HAP-1 (cell line): ENCODE measurements at regions of chr9 and their contacts with region 1.

Region 1: GRCh38 chr9:75001719-75002422 is 26.2 kb downstream of the CARNMT1 start:
- DNase-seq: peak; percentile 9 to 65
- H3K4me3 ChIP-seq: no peak overlapping the region
- H3K4me1 ChIP-seq: no peaks in the 10 kb centered on the region
- H3K27me3 ChIP-seq: no peaks in the 10 kb centered on the region

Region 2: DNA sequence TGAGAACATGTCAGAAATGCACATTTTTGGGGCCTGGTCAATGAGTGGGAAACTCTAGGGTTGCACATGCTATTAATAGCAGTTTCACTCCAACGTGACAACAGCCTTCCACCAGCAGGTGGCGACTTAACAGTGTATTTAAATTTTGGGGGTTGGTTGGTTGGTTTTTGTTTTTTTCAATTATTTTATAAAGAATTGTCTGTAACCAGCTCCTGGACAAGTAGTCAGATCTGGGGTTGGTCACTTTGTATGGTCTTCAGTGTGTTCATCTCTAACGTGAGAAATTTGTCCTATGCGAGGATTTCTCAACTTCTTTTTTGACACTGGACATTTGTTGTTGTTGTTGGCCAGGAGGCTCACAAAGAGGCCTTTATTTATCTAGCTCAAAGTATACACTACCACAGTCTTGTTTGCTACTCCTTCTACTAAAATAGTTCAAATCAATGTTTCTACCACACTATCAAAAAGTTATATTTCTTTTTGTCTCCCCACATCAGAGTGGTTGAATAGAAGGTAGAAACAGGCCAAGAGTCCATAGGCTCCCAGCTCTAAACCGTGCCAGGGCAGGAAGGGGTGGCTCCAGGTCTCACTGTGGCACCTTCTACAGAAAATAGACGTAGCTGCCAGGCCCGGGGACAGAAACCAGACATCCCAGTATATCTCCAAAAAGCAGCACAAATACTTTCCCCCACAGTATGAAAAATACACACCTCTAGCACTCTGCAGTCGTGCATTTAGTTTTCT is 224.6 kb before region 1 on chr9:
- in situ Hi-C with region 1: loop called (anchors 5 kb)
- DNase-seq: peak; percentile 40 to 76
- H3K4me3 ChIP-seq: no peak overlapping the region
- H3K4me1 ChIP-seq: no peaks in the 10 kb centered on the region
- H3K27me3 ChIP-seq: 0 out of 2 replicates have a peak, but pooled peaks cover 4% of the 10 kb centered on the region

Region 3: GRCh38 chr9:75161116-75161857 is 159.4 kb after region 1 on chr9:
- in situ Hi-C with region 1: no loop called
- DNase-seq: no peak
- H3K4me3 ChIP-seq: no peak overlapping the region
- H3K4me1 ChIP-seq: no peaks in the 10 kb centered on the region
- H3K27me3 ChIP-seq: no peaks in the 10 kb centered on the region